HepG2 (cell line): ENCODE measurements at regions of chr4 and their contacts with region 1.

Region 1: DNA sequence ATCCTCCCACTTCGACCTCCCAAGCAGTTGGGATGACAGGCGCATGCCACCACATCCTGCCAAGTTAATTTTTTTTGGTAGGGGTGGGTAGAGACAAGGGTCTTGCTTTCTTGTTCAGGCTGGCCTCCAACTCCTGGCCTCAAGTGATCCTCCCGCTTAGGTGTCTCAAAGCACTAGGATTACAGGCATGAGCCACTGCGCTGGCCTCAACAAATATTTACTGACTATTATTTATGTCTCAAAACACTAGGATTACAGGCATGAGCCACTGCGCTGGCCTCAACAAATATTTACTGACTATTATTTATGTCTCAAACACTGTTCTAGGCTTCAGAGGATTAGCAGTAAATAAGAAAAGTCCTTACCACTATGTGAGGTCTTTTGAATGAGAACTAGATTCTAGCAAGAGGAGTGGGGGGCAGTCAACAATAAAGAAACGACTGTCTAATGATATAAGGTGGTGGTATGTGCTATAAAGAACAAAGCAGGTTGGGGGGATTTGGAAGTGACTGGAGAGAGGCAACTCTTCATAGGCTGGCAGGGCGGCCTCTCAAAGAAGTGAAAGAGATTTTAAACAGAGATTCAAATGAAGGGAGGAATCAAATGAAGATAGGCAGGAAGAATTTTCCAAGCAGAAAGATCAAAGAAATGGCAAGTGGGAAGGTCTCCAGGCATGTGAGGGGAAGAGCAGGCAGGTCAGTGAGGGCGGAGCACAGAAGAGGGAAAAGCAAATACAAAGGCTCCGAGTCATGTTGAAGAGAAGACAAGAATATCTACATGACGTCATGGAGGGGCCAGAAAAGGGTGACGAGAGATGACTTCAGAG is 12.7 kb upstream of the ACSL1 start:
- DNase-seq: peak; percentile 98
- ATAC-seq: peak; percentile 85
- H3K4me3 ChIP-seq: 0 out of 6 replicates have a peak overlapping the region, but pooled peaks of 1 of the 3 experiments have one; percentile 1
- H3K27ac ChIP-seq: peak overlapping the region; percentile 51
- H3K4me1 ChIP-seq: peaks cover 36% of the 10 kb centered on the region
- H3K27me3 ChIP-seq: no peaks in the 10 kb centered on the region; a peak in 1 of 5 replicates
- CTCF ChIP-seq: no peak
- EP300 ChIP-seq: peak; percentile 18 to 87; a peak in 3 of 4 replicates
- POLR2A ChIP-seq: no peak
- RAD21 ChIP-seq: no peak

Region 2: GRCh38 chr4:184744236-184744635 is 94.2 kb before region 1 on chr4:
- CTCF ChIA-PET with region 1: no interaction called
- POLR2A ChIA-PET with region 1: no interaction called
- in situ Hi-C with region 1: no loop called
- intact Hi-C with region 1: no loop called
- DNase-seq: no peak
- ATAC-seq: no peak
- H3K4me3 ChIP-seq: peak overlapping the region in 1 of 3 experiments; percentile 10; a peak in 1 of 6 replicates
- H3K27ac ChIP-seq: no peak overlapping the region
- H3K4me1 ChIP-seq: peaks cover 53% of the 10 kb centered on the region
- H3K27me3 ChIP-seq: no peaks in the 10 kb centered on the region
- CTCF ChIP-seq: no peak
- EP300 ChIP-seq: no peak
- POLR2A ChIP-seq: no peak
- RAD21 ChIP-seq: no peak

Region 3: GRCh38 chr4:184805462-184806228 is 32.8 kb before region 1 on chr4:
- CTCF ChIA-PET with region 1: no interaction called
- POLR2A ChIA-PET with region 1: no interaction called
- in situ Hi-C with region 1: no loop called
- intact Hi-C with region 1: loop called (anchors 1 kb)
- DNase-seq: no peak
- ATAC-seq: peak; percentile 57
- H3K4me3 ChIP-seq: no peak overlapping the region
- H3K27ac ChIP-seq: no peak overlapping the region
- H3K4me1 ChIP-seq: peaks cover 51% of the 10 kb centered on the region
- H3K27me3 ChIP-seq: no peaks in the 10 kb centered on the region
- CTCF ChIP-seq: no peak
- EP300 ChIP-seq: no peak
- POLR2A ChIP-seq: no peak
- RAD21 ChIP-seq: no peak

Region 4: GRCh38 chr4:184889666-184890335 is 51.3 kb after region 1 on chr4:
- CTCF ChIA-PET with region 1: no interaction called
- POLR2A ChIA-PET with region 1: interaction called, 3 read pairs
- in situ Hi-C with region 1: no loop called
- intact Hi-C with region 1: loop called (anchors 5 kb)
- DNase-seq: no peak
- ATAC-seq: no peak
- H3K4me3 ChIP-seq: no peak overlapping the region
- H3K27ac ChIP-seq: no peak overlapping the region
- H3K4me1 ChIP-seq: peaks cover 72% of the 10 kb centered on the region
- H3K27me3 ChIP-seq: no peaks in the 10 kb centered on the region
- CTCF ChIP-seq: no peak
- EP300 ChIP-seq: no peak
- POLR2A ChIP-seq: no peak
- RAD21 ChIP-seq: no peak